ENCODE measurements at regions of chr19 and their contacts with region 1.

Region 1: GRCh38 chr19:56838909-56839651 is 1.4 kb downstream of the PEG3 start:
- DNase-seq: no peak
- ATAC-seq: no peak
- H3K4me3 ChIP-seq: no peak overlapping the region
- H3K27ac ChIP-seq: no peak overlapping the region
- H3K4me1 ChIP-seq: no peaks in the 10 kb centered on the region
- H3K27me3 ChIP-seq: no peaks in the 10 kb centered on the region
- CTCF ChIP-seq: no peak

Region 2: GRCh38 chr19:56864443-56865125 is 25.5 kb after region 1 on chr19:
- CTCF ChIA-PET with region 1: interaction called, 11 read pairs
- POLR2A ChIA-PET with region 1: no interaction called
- in situ Hi-C with region 1: no loop called
- intact Hi-C with region 1: no loop called
- DNase-seq: no peak
- ATAC-seq: no peak
- H3K4me3 ChIP-seq: no peak overlapping the region
- H3K27ac ChIP-seq: no peak overlapping the region
- H3K4me1 ChIP-seq: no peaks in the 10 kb centered on the region
- H3K27me3 ChIP-seq: no peaks in the 10 kb centered on the region
- CTCF ChIP-seq: no peak

Region 3: GRCh38 chr19:56885173-56885987 is 46.3 kb after region 1 on chr19:
- CTCF ChIA-PET with region 1: no interaction called
- POLR2A ChIA-PET with region 1: no interaction called
- in situ Hi-C with region 1: no loop called
- intact Hi-C with region 1: no loop called
- DNase-seq: no peak
- ATAC-seq: no peak
- H3K4me3 ChIP-seq: no peak overlapping the region
- H3K27ac ChIP-seq: no peak overlapping the region
- H3K4me1 ChIP-seq: no peaks in the 10 kb centered on the region
- H3K27me3 ChIP-seq: no peaks in the 10 kb centered on the region
- CTCF ChIP-seq: no peak

Measured in Panc1 (cell line).